Ascending aorta (tissue), 2 donors: ENCODE measurements at regions of chr14 and their contacts with region 1.

Region 1: GRCh38 chr14:75258615-75259466 is 19.8 kb upstream of the FOS start:
- DNase-seq: peak; percentile 97 to 100
- H3K4me3 ChIP-seq: peak overlapping the region; percentile 46 to 62
- H3K27ac ChIP-seq: peak overlapping the region; percentile 93 to 97
- H3K4me1 ChIP-seq: peaks cover 0 to 32% of the 10 kb centered on the region in 2 donors
- H3K27me3 ChIP-seq: no peaks in the 10 kb centered on the region
- CTCF ChIP-seq: no peak

Region 2: DNA sequence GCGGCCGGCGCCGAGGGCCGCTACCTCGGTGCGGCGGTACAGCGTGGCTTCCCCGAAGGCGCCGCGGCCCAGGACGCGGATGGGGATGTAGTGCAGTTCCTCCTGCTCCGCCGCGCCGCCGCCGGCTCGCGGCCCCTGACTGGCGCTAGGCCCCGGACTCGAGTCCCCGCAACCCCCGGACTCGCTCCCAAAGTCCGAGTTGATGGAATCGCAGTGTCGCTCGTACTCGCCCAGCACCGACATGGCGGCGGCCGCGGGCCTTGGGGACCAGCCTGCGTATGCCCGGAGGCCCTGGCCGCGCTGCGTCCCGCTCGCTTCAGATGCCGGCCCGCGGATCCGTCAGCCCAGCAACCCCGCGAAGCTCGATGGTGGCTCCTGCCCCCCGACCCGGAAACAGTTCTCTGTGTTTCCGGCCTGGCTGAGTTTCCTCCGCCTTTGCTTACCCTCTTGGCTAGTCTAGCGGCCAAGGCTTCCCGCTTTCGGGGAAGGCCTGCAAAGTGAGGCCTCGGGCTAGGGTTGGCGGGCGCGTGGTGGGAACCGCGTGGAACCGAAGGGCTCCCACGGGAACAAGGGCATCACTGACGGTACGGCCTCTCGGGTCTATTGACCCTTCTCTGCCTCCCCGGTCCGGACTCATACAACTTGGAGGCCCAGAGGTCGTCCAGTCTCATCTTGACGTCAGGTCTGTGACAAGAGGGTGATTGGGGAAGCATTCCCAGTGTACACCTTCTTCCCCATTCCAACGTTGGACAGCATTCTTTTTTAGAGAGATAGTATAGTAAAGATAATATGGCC is 132.0 kb before region 1 on chr14 and contains the start of gene NEK9:
- intact Hi-C with region 1: no loop called
- DNase-seq: peak; percentile 36 to 94
- H3K4me3 ChIP-seq: peak within 1 kb of the TSS; percentile 67 to 89
- H3K27ac ChIP-seq: peak within 1 kb of the TSS; percentile 90 to 99
- H3K4me1 ChIP-seq: peaks cover 6 to 18% of the 10 kb centered on the region in 2 donors
- H3K27me3 ChIP-seq: no peaks in the 10 kb centered on the region
- CTCF ChIP-seq: no peak
- total RNA-seq, gene NEK9: 116 TPM

Region 3: DNA sequence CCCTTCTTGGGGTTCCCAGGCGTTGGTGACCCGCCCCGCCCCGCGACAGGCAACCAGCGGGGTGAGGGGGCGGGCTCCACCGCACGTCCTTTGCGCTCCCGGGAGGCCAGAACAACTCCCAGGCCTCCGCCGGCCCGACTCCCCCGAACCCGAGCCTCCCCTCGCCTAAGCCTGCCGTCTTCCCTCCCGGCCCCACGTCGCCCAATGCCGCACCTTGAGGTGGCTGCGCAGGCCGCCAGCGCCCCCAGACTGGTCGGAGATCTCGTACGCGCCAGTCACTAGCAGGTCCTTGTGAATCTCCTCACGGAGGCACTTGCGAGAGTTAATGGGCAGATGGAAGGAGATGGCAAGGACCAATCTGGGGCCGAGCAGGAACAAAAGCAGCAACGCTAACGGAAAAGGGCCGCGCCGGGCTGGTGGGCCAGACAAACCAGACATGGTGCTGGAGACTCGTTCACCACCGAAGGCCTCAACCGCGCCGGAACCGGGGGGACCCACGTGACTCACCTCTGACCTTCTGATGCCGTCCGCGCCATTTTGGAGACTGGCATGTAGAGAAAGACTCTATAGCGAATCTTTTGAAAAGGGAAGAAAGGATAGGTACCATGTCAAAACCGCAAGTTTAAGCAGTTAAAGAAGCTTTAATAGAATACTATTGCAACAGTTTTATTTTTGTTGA is 82.6 kb before region 1 on chr14 and contains the start of gene TMED10:
- intact Hi-C with region 1: loop called (anchors 2 kb)
- DNase-seq: peak; percentile 55 to 92
- H3K4me3 ChIP-seq: peak within 1 kb of the TSS; percentile 92 to 97
- H3K27ac ChIP-seq: peak within 1 kb of the TSS; percentile 99 to 100
- H3K4me1 ChIP-seq: peaks cover 0 to 15% of the 10 kb centered on the region in 2 donors
- H3K27me3 ChIP-seq: no peaks in the 10 kb centered on the region
- CTCF ChIP-seq: peak in 1 of 3 experiments; percentile 10
- total RNA-seq, gene TMED10: 190 TPM

Region 4: DNA sequence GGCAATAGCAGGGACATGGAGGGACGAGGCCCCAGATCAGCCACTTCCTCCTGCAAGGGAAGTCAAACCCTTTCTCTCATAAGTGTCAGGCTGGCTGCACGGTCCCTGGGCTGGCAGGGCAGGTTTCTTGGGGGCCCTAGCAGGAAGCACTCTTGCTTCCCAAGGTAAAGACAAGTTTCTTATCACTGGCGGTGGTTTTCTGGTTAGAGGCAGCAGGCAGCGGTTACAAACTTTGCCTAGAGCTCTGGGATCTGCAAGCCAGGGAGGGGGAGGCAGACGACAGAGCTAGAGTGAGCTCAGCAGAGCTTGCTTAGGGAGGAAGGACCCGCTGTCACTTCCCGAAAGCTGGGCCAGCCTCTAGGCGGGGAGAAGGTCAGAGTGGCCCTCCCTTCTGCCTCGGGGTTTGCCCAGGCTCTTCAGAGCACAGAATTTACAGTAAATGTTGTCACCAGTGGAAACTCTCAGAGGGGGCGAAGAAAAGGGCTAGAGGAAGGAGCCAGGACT is 283.8 kb after region 1 on chr14:
- intact Hi-C with region 1: no loop called
- DNase-seq: peak; percentile 14 to 85
- H3K4me3 ChIP-seq: no peak overlapping the region
- H3K27ac ChIP-seq: peak overlapping the region in 1 of 2 donors; percentile 19
- H3K4me1 ChIP-seq: no peaks in the 10 kb centered on the region
- H3K27me3 ChIP-seq: no peaks in the 10 kb centered on the region
- CTCF ChIP-seq: no peak